Heart right ventricle (tissue), 16 donors: ENCODE measurements at regions of chr15 and their contacts with region 1.

Region 1: GRCh38 chr15:80242132-80242769 is 9.8 kb downstream of the CTXND1 start:
- DNase-seq: no peak
- ATAC-seq: peak in 3 of 8 donors; percentile 36 to 43 (median 38)
- H3K4me3 ChIP-seq: no peak overlapping the region
- H3K27ac ChIP-seq: no peak overlapping the region
- H3K4me1 ChIP-seq: peaks cover 0 to 6% (median 0%) of the 10 kb centered on the region in 9 donors
- H3K27me3 ChIP-seq: peaks cover 0 to 44% (median 20%) of the 10 kb centered on the region in 7 donors
- CTCF ChIP-seq: peak; percentile 38 to 63 (median 60)

Region 2: GRCh38 chr15:80289528-80290495 is 47.6 kb after region 1 on chr15:
- intact Hi-C with region 1: loop called in 1 of 10 experiments (anchors 5 kb)
- DNase-seq: no peak
- ATAC-seq: no peak
- H3K4me3 ChIP-seq: no peak overlapping the region
- H3K27ac ChIP-seq: peak overlapping the region in 3 of 10 donors; percentile 70 to 83 (median 81)
- H3K4me1 ChIP-seq: peaks cover 0 to 22% (median 12%) of the 10 kb centered on the region in 9 donors
- H3K27me3 ChIP-seq: no peaks in the 10 kb centered on the region
- CTCF ChIP-seq: no peak

Region 3: GRCh38 chr15:80309769-80310384 is 67.6 kb after region 1 on chr15:
- intact Hi-C with region 1: loop called in 7 of 10 experiments (anchors 1 to 5 kb)
- DNase-seq: no peak
- ATAC-seq: peak in 4 of 8 donors; percentile 47 to 59 (median 52)
- H3K4me3 ChIP-seq: no peak overlapping the region
- H3K27ac ChIP-seq: no peak overlapping the region
- H3K4me1 ChIP-seq: no peaks in the 10 kb centered on the region
- H3K27me3 ChIP-seq: peaks cover 0 to 16% (median 5%) of the 10 kb centered on the region in 7 donors
- CTCF ChIP-seq: peak in 8 of 9 donors; percentile 22 to 66 (median 55)